ENCODE measurements at regions of chr1 and their contacts with region 1.

Region 1: DNA sequence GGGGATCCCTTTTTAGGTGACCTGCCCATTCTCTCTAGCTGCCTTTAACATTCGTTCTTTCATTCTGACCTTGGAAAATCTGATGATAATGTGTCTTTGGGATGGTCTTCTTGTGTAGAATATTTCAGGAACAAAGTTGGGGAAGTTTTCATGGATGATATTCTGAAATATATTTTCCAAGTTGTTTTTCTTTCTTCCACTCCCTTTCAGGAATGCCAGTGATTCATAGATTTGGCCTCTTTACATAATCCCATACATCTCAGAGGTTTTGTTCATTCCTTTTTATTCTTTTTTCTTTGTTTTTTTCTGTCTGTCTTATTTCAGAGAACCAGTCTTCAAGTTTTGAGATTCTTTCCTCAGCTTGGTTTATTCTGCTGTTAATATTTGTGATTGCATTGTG is 13.9 kb upstream of the SCMH1 start:
- DNase-seq: no peak
- H3K4me3 ChIP-seq: no peak overlapping the region
- H3K27ac ChIP-seq: no peak overlapping the region
- H3K4me1 ChIP-seq: no peaks in the 10 kb centered on the region
- H3K27me3 ChIP-seq: no peaks in the 10 kb centered on the region
- CTCF ChIP-seq: no peak

Region 2: GRCh38 chr1:41109316-41110197 is 146.4 kb before region 1 on chr1:
- CTCF ChIA-PET with region 1: no interaction called
- POLR2A ChIA-PET with region 1: interaction called, 17 read pairs
- intact Hi-C with region 1: no loop called
- DNase-seq: peak; percentile 66 to 92
- H3K4me3 ChIP-seq: peak overlapping the region; percentile 37; the same call in 1 of the 2 replicates
- H3K27ac ChIP-seq: peak overlapping the region; percentile 94
- H3K4me1 ChIP-seq: peaks cover 45% of the 10 kb centered on the region
- H3K27me3 ChIP-seq: no peaks in the 10 kb centered on the region
- CTCF ChIP-seq: no peak

Region 3: DNA sequence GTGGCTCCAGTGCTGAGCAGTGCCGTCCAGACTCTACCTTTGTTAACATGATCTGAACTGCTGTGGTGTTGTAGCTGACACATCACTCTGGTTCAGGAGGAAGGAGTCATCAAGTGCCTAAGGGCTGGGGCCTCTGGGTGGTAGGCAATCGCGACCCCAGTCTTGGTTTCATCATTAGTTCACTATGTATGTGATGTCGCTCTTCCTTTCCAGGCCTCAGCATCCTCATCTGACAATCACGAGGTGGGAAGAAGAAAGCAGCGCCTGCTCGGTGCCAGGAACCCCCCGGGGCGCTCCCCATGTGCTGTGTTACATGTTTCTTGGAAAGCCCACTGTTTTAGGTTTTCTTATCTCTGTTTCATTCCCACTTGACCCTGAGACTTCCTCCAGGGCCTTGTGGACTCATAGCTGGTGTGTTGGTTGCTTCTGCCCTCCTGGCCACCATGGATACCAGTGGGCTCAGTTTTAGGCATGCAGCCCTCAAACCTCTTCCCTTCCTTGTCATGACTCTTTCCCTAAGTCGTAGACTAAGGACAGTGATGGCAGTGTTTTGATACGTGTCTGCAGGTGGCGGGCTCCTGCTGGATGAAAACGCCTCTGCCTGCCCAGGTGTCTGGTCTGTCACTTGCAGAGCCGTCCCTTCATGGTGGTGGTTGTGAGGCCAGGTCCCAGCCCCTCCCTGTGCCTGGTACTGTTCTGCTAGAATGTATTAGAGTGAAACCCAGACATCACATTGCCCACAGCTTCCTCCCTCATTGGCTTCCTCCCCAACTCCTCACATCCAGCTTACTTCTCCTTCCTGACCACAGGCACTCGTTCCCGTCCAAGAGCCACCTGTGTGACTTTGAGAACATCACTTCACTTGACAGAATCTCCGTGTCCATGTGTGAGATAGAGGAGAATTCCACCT is 88.1 kb after region 1 on chr1:
- CTCF ChIA-PET with region 1: interaction called, 10 read pairs
- POLR2A ChIA-PET with region 1: no interaction called
- intact Hi-C with region 1: no loop called
- DNase-seq: peak in 1 of 2 experiments; percentile 35
- H3K4me3 ChIP-seq: no peak overlapping the region
- H3K27ac ChIP-seq: no peak overlapping the region
- H3K4me1 ChIP-seq: peaks cover 64% of the 10 kb centered on the region
- H3K27me3 ChIP-seq: no peaks in the 10 kb centered on the region
- CTCF ChIP-seq: no peak

Region 4: GRCh38 chr1:41461790-41462611 is 206.0 kb after region 1 on chr1:
- CTCF ChIA-PET with region 1: interaction called, 12 read pairs
- POLR2A ChIA-PET with region 1: no interaction called
- intact Hi-C with region 1: no loop called
- DNase-seq: no peak
- H3K4me3 ChIP-seq: no peak overlapping the region
- H3K27ac ChIP-seq: no peak overlapping the region
- H3K4me1 ChIP-seq: no peaks in the 10 kb centered on the region
- H3K27me3 ChIP-seq: no peaks in the 10 kb centered on the region
- CTCF ChIP-seq: no peak

Region 5: DNA sequence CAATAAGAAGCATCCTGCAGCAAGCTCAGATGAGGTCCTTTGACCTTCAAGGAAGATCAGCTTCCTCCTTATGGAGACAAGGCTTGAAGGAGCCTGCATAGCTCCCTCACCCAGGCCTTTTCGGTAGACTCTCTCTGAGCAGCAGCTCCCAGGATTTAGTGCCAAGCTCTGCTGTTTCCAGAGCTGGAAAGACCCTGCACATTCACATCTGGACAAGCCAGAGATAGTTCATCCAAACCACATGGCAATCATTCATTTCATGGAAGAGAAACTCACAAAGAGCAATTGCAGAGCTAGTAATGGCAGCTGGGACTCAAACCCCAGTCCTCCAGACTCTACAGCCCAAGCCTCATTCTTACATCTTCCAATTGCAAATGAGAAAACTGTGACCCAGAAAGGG is 305.0 kb after region 1 on chr1:
- CTCF ChIA-PET with region 1: no interaction called
- POLR2A ChIA-PET with region 1: interaction called, 10 read pairs
- intact Hi-C with region 1: no loop called
- DNase-seq: no peak
- H3K4me3 ChIP-seq: no peak overlapping the region
- H3K27ac ChIP-seq: no peak overlapping the region
- H3K4me1 ChIP-seq: no peaks in the 10 kb centered on the region
- H3K27me3 ChIP-seq: no peaks in the 10 kb centered on the region
- CTCF ChIP-seq: no peak